CD8-positive, alpha-beta T cell (primary cell): ENCODE measurements at regions of chr10 and their contacts with region 1.

Region 1: GRCh38 chr10:62779487-62780248 is 24.9 kb upstream of the ADO start:
- DNase-seq: peak; percentile 63 to 97 (median 84)
- ATAC-seq: peak; percentile 96
- H3K4me3 ChIP-seq: no peak overlapping the region
- H3K4me3 Mint-ChIP-seq: peak overlapping the region; percentile 12
- H3K27ac ChIP-seq: no peak overlapping the region
- H3K27ac Mint-ChIP-seq: peak overlapping the region; percentile 81
- H3K4me1 ChIP-seq: peaks cover 12% of the 10 kb centered on the region
- H3K4me1 Mint-ChIP-seq: peaks cover 18% of the 10 kb centered on the region
- H3K27me3 ChIP-seq: no peaks in the 10 kb centered on the region
- H3K27me3 Mint-ChIP-seq: no peaks in the 10 kb centered on the region
- CTCF ChIP-seq: no peak

Region 2: DNA sequence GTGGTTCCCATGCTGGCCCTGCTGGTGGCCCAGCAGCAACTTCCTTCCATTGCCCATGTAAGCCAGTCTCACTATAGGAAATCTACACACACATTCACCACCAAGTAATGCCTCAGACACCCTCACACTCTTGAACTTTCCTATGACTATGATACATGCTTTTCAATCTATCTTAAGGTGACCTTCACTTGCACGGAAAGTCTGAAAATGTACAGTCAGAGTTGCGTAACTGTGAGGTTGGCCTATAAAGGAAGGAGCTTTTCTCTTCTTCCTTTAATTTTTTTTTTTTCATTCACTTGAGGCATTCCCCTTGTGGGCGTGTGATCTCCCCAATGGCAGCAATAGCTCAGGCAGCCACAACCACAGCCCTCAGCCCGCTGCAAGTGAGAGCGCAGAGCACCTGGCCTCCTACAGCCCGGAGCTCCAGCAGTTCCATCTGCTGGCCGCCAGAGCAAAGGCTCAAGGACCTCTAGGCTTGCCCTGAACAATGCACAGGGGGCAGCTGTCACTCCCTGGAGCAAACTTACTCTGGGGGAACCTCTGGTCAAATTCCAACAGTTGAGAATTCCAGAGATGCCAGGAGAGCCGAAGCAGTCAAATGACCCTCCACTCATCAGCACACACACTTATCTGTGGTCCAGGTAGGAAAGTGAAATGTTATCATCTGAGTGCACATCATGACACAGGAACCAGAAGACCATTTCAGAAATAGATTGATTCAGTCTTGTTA is 98.3 kb before region 1 on chr10:
- CTCF ChIA-PET with region 1: no interaction called
- POLR2A ChIA-PET with region 1: no interaction called
- intact Hi-C with region 1: loop called in 1 of 2 experiments (anchors 5 kb)
- DNase-seq: peak; percentile 18 to 94 (median 57)
- ATAC-seq: peak; percentile 94
- H3K4me3 ChIP-seq: no peak overlapping the region
- H3K4me3 Mint-ChIP-seq: no peak overlapping the region
- H3K27ac ChIP-seq: peak overlapping the region in 1 of 2 experiments; percentile 20
- H3K27ac Mint-ChIP-seq: peak overlapping the region; percentile 58
- H3K4me1 ChIP-seq: peaks cover 14% of the 10 kb centered on the region
- H3K4me1 Mint-ChIP-seq: peaks cover 23% of the 10 kb centered on the region
- H3K27me3 ChIP-seq: no peaks in the 10 kb centered on the region
- H3K27me3 Mint-ChIP-seq: peaks cover 6% of the 10 kb centered on the region
- CTCF ChIP-seq: no peak

Region 3: DNA sequence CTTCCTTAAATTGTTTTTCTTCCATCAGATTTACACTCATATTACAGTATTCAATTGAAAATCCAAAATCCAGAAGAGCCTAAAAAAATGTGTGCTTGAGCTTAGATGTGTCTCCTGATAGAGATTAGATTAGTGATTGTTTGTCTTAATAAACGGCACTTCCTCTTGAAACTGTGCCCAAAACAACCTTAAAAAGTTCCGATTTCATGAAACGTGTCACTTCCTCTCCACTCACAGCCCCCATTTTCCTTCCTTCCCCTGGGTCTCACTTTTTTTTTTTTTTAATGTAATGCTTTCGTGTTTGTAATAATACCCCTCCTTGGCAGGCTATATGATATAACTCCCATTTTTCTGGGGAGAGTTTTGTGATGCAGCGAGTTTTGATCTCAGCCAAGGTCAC is 90.0 kb before region 1 on chr10:
- CTCF ChIA-PET with region 1: interaction called, 4 read pairs
- POLR2A ChIA-PET with region 1: no interaction called
- intact Hi-C with region 1: loop called (anchors 5 kb)
- DNase-seq: peak in 2 of 9 experiments; percentile 62 to 83
- ATAC-seq: peak; percentile 44
- H3K4me3 ChIP-seq: peak overlapping the region in 1 of 2 experiments; percentile 21
- H3K4me3 Mint-ChIP-seq: peak overlapping the region; percentile 60
- H3K27ac ChIP-seq: peak overlapping the region in 1 of 2 experiments; percentile 81
- H3K27ac Mint-ChIP-seq: peak overlapping the region; percentile 82
- H3K4me1 ChIP-seq: peaks cover 31% of the 10 kb centered on the region
- H3K4me1 Mint-ChIP-seq: peaks cover 46% of the 10 kb centered on the region
- H3K27me3 ChIP-seq: no peaks in the 10 kb centered on the region
- H3K27me3 Mint-ChIP-seq: no peaks in the 10 kb centered on the region
- CTCF ChIP-seq: no peak

Region 4: GRCh38 chr10:62755662-62756653 is 23.7 kb before region 1 on chr10:
- CTCF ChIA-PET with region 1: no interaction called
- POLR2A ChIA-PET with region 1: no interaction called
- intact Hi-C with region 1: loop called in 1 of 2 experiments (anchors 2 kb)
- DNase-seq: peak in 2 of 9 experiments; percentile 21 to 54
- ATAC-seq: peak; percentile 61
- H3K4me3 ChIP-seq: no peak overlapping the region
- H3K4me3 Mint-ChIP-seq: no peak overlapping the region
- H3K27ac ChIP-seq: no peak overlapping the region
- H3K27ac Mint-ChIP-seq: peak overlapping the region; percentile 28
- H3K4me1 ChIP-seq: peaks cover 19% of the 10 kb centered on the region
- H3K4me1 Mint-ChIP-seq: peaks cover 29% of the 10 kb centered on the region
- H3K27me3 ChIP-seq: no peaks in the 10 kb centered on the region
- H3K27me3 Mint-ChIP-seq: no peaks in the 10 kb centered on the region
- CTCF ChIP-seq: no peak

Region 5: DNA sequence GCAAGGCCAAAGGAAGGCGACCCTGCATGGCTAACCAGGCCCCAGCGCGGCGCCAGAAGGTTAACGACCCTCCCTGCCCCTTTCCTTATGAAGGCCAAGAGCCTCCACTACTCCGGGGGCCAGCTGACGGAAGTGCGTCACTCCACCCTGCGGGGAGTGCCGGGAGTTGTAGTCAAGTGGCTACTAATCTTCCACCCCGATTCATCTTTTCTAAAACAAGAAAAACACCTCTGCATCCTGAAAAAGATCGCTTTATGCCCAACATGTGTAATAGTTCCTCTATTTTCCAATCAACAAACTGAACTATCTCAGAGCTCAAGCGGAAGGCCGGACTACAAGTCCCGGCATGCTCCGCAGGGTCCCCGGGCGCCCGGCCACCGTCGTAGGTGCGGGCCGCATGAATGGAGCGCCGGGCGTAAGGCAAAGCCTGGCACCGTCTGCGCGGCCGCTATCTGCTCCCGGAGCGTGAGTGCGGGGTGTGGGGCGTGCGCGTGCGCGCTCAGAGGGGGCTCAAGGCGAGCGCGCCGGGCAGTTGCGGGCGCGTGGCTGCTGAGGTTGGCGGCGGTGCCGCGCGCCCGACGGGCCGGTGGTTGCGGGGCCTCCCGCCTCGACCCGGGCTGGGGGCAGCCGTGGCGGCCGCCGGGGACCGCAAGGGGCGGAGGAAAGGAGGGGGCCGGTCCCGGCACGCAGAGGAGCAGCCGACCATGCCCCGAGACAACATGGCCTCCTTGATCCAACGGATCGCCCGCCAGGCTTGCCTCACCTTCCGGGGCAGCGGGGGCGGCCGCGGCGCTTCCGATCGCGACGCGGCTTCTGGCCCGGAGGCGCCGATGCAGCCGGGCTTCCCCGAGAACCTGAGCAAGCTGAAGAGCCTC is 24.9 kb after region 1 on chr10 and contains the start of gene ADO:
- CTCF ChIA-PET with region 1: no interaction called
- POLR2A ChIA-PET with region 1: interaction called, 6 read pairs
- intact Hi-C with region 1: loop called (anchors 1 kb)
- DNase-seq: peak; percentile 52 to 90 (median 78)
- ATAC-seq: peak; percentile 88
- H3K4me3 ChIP-seq: peak within 1 kb of the TSS; percentile 88 to 89
- H3K4me3 Mint-ChIP-seq: peak within 1 kb of the TSS; percentile 97
- H3K27ac ChIP-seq: peak within 1 kb of the TSS; percentile 76 to 98
- H3K27ac Mint-ChIP-seq: peak within 1 kb of the TSS; percentile 99
- H3K4me1 ChIP-seq: peaks cover 29% of the 10 kb centered on the region
- H3K4me1 Mint-ChIP-seq: peaks cover 40% of the 10 kb centered on the region
- H3K27me3 ChIP-seq: no peaks in the 10 kb centered on the region
- H3K27me3 Mint-ChIP-seq: no peaks in the 10 kb centered on the region
- CTCF ChIP-seq: no peak
- total RNA-seq, gene ADO: 12.7 to 13.1 TPM

Region 6: GRCh38 chr10:63206997-63207811 is 427.5 kb after region 1 on chr10:
- CTCF ChIA-PET with region 1: no interaction called
- POLR2A ChIA-PET with region 1: no interaction called
- intact Hi-C with region 1: no loop called
- DNase-seq: peak in 2 of 9 experiments; percentile 14 to 34
- ATAC-seq: peak; percentile 20
- H3K4me3 ChIP-seq: no peak overlapping the region
- H3K4me3 Mint-ChIP-seq: peak overlapping the region; percentile 54
- H3K27ac ChIP-seq: peak overlapping the region in 1 of 2 experiments; percentile 36
- H3K27ac Mint-ChIP-seq: peak overlapping the region; percentile 7
- H3K4me1 ChIP-seq: peaks cover 13% of the 10 kb centered on the region
- H3K4me1 Mint-ChIP-seq: peaks cover 65% of the 10 kb centered on the region
- H3K27me3 ChIP-seq: no peaks in the 10 kb centered on the region
- H3K27me3 Mint-ChIP-seq: no peaks in the 10 kb centered on the region
- CTCF ChIP-seq: no peak